Activated B cell treated with CpG ODN at 0.5 μM for 24 hours (primary cell): ENCODE measurements at regions of chr10 and their contacts with region 1.

Region 1: DNA sequence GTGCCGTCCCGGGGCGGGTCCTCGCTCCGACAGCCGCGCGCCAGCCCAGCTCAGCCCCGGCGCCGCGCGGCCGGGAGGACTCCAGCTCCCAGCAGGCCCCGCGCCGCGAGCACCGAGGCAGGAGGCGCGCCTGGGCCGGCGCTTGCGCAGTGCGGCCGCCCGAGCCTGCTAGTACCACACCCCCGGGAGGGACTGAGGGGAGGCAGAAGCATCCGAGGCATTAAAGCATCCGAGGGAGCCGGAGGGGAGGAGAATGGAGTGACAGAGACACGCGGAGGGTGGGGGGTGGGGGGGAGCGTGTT is at the start of gene GRK5:
- DNase-seq: peak; percentile 96
- ATAC-seq: peak; percentile 81
- H3K4me3 Mint-ChIP-seq: peak within 1 kb of the TSS; percentile 93
- H3K27ac Mint-ChIP-seq: peak within 1 kb of the TSS; percentile 95
- H3K4me1 Mint-ChIP-seq: peaks cover 40% of the 10 kb centered on the region
- H3K27me3 Mint-ChIP-seq: no peaks in the 10 kb centered on the region
- CTCF ChIP-seq: no peak
- total RNA-seq, gene GRK5: 19.9 and 21.3 TPM in 2 replicates

Region 2: DNA sequence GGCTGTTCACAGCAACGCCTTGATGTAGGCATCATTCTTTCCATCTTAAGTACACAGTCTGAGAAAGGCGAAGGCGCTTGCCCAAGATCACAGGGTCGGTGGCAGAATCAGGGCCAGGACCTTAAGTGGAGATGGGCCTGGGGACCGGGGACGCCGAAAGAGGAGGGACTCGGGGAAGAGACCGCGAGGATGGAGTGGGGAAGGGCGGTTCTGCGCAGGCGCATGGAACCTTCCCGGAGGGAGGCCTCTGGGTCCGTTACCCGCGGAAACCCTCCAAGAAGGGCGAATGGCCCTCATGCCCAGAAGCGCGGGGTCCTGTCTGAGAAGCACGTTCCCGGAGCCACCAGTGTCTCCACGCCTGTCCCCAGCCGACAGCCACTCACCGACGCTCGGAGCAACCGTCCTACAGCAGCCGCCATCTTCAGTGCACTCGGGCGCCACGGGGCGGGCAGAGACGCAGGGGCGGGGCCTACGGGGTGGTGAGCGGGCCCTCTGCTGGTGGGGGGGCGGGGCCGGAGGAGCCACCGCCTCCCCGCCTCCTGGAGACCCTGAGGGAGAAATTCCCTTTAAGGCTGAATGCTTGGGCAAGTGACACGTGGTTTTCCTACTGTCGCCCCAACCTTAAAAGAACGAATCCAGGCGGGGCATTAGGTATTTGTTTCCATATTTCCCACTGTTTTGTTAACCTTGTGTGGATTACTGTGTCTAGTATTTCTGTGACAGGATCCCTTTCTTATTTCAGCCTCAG is 28.8 kb before region 1 on chr10 and contains the start of gene PRDX3:
- CTCF ChIA-PET with region 1: interaction called, 3 read pairs
- POLR2A ChIA-PET with region 1: no interaction called
- intact Hi-C with region 1: loop called (anchors 1 kb)
- DNase-seq: peak; percentile 92
- ATAC-seq: peak; percentile 99
- H3K4me3 Mint-ChIP-seq: peak within 1 kb of the TSS; percentile 98
- H3K27ac Mint-ChIP-seq: peak within 1 kb of the TSS; percentile 93
- H3K4me1 Mint-ChIP-seq: peaks cover 26% of the 10 kb centered on the region
- H3K27me3 Mint-ChIP-seq: no peaks in the 10 kb centered on the region
- CTCF ChIP-seq: no peak
- total RNA-seq, gene PRDX3: 62.8 and 63.7 TPM in 2 replicates

Region 3: GRCh38 chr10:119252470-119253151 is 45.3 kb after region 1 on chr10:
- CTCF ChIA-PET with region 1: no interaction called
- POLR2A ChIA-PET with region 1: no interaction called
- intact Hi-C with region 1: no loop called
- DNase-seq: no peak
- ATAC-seq: no peak
- H3K4me3 Mint-ChIP-seq: no peak overlapping the region
- H3K27ac Mint-ChIP-seq: no peak overlapping the region
- H3K4me1 Mint-ChIP-seq: peaks cover 38% of the 10 kb centered on the region
- H3K27me3 Mint-ChIP-seq: no peaks in the 10 kb centered on the region
- CTCF ChIP-seq: no peak

Region 4: GRCh38 chr10:119315128-119316001 is 108.0 kb after region 1 on chr10:
- CTCF ChIA-PET with region 1: interaction called, 4 read pairs
- POLR2A ChIA-PET with region 1: interaction called, 134 read pairs
- intact Hi-C with region 1: no loop called
- DNase-seq: peak; percentile 41
- ATAC-seq: peak; percentile 51
- H3K4me3 Mint-ChIP-seq: peak overlapping the region; percentile 62
- H3K27ac Mint-ChIP-seq: peak overlapping the region; percentile 88
- H3K4me1 Mint-ChIP-seq: peaks cover 93% of the 10 kb centered on the region
- H3K27me3 Mint-ChIP-seq: no peaks in the 10 kb centered on the region
- CTCF ChIP-seq: no peak

Region 5: GRCh38 chr10:119407254-119407777 is 200.0 kb after region 1 on chr10:
- CTCF ChIA-PET with region 1: interaction called, 11 read pairs
- POLR2A ChIA-PET with region 1: interaction called, 3 read pairs
- intact Hi-C with region 1: no loop called
- DNase-seq: no peak
- ATAC-seq: peak; percentile 37
- H3K4me3 Mint-ChIP-seq: no peak overlapping the region
- H3K27ac Mint-ChIP-seq: peak overlapping the region; percentile 57
- H3K4me1 Mint-ChIP-seq: peaks cover 34% of the 10 kb centered on the region
- H3K27me3 Mint-ChIP-seq: no peaks in the 10 kb centered on the region
- CTCF ChIP-seq: no peak

Region 6: DNA sequence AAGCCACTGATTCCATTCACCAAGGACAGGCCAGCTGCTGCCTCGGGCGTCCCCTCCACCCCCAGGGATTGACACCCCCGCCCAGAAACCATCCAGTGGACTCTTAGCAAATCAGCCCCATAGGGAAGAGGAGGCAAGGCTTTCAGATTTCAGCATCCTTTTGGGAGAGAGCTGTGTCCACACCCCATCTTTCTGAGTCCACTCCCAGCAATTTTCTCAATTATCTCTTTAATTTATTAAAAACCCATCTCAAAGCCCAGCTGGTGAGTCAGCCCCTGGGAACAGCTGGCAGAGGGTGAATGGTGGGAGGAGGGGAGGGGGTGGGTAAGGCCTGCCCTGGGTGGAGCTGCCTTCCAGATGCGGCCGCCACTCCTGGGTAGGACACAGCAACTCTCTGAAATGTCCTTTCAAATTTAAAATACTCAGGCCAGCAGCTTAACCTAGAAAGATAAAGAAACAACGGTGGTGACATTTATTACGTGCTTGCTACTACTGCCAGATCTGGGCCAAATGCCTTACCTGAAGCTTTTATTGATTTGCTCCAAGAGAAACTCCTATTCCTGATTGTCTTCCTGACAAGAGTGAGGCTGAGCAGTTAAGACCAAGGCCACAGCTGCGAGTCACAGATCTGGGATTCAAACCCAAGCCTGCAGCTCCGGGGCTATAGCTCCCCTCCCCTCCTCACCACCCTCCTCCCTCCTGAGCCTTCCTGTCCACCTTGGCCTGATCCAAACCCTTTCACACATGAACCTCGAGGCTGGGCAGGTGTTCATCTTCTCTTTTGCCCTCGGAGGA is 214.8 kb after region 1 on chr10:
- CTCF ChIA-PET with region 1: interaction called, 80 read pairs
- POLR2A ChIA-PET with region 1: interaction called, 15 read pairs
- intact Hi-C with region 1: loop called (anchors 1 kb)
- DNase-seq: no peak
- ATAC-seq: no peak
- H3K4me3 Mint-ChIP-seq: no peak overlapping the region
- H3K27ac Mint-ChIP-seq: no peak overlapping the region
- H3K4me1 Mint-ChIP-seq: peaks cover 2% of the 10 kb centered on the region
- H3K27me3 Mint-ChIP-seq: no peaks in the 10 kb centered on the region
- CTCF ChIP-seq: no peak

Region 7: DNA sequence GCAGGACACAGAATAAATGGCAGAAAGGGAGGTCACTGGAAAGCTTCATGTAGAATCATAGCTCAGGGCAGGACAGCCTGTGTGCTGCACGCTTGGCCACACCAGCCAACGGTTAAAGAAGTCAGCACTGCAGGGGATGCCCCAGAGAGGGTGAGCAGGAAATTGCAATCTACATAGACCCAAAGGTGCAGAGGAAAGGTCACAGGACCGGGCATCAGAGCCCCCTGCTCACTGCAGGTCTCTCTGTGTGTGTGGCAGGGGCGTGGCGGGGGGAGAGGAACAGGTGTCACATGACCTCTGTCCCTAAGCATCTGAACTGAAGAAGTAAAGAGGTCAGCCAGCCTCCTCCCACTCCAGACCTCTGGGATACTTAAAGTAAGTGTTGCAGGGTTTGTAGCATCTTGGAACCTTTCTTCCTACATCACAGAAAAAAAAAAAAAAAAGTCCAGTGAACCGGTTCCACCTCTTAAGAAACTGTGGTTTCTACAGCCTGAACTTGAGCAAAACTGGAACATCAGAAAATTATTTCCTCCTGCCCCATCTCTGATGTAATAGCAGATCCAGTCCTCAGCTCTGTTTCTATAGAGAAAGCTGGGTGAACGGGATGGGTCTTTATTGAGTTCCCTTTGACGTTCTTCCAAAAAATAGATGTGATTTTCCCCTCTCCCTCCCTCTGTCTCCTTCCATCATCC is 270.9 kb after region 1 on chr10:
- CTCF ChIA-PET with region 1: interaction called, 6 read pairs
- POLR2A ChIA-PET with region 1: interaction called, 8 read pairs
- intact Hi-C with region 1: loop called (anchors 1 kb)
- DNase-seq: peak; percentile 66
- ATAC-seq: peak; percentile 96
- H3K4me3 Mint-ChIP-seq: peak overlapping the region; percentile 68
- H3K27ac Mint-ChIP-seq: peak overlapping the region; percentile 93
- H3K4me1 Mint-ChIP-seq: peaks cover 40% of the 10 kb centered on the region
- H3K27me3 Mint-ChIP-seq: no peaks in the 10 kb centered on the region
- CTCF ChIP-seq: no peak